ENCODE measurements at regions of chr1 and their contacts with region 1.

Region 1: GRCh38 chr1:32716312-32717148 is 14.0 kb upstream of the SYNC start:
- DNase-seq: peak; percentile 70
- H3K4me3 ChIP-seq: no peak overlapping the region
- H3K27ac ChIP-seq: no peak overlapping the region; a peak in 1 of 4 replicates
- H3K4me1 ChIP-seq: peaks cover 0 to 4% of the 10 kb centered on the region in 2 experiments; a peak in 1 of 4 replicates
- H3K27me3 ChIP-seq: no peaks in the 10 kb centered on the region
- CTCF ChIP-seq: no peak
- EP300 ChIP-seq: no peak
- RAD21 ChIP-seq: no peak

Region 2: GRCh38 chr1:32609180-32609579 is 107.3 kb before region 1 on chr1:
- CTCF ChIA-PET with region 1: no interaction called
- POLR2A ChIA-PET with region 1: no interaction called
- DNase-seq: no peak
- H3K4me3 ChIP-seq: no peak overlapping the region
- H3K27ac ChIP-seq: no peak overlapping the region
- H3K4me1 ChIP-seq: peaks cover 0 to 3% of the 10 kb centered on the region in 2 experiments; a peak in 1 of 4 replicates
- H3K27me3 ChIP-seq: no peaks in the 10 kb centered on the region
- CTCF ChIP-seq: no peak
- EP300 ChIP-seq: no peak
- RAD21 ChIP-seq: no peak

Region 3: GRCh38 chr1:32695098-32695904 is 21.2 kb before region 1 on chr1:
- CTCF ChIA-PET with region 1: interaction called, 74 read pairs
- POLR2A ChIA-PET with region 1: no interaction called
- DNase-seq: no peak
- H3K4me3 ChIP-seq: no peak overlapping the region
- H3K27ac ChIP-seq: no peak overlapping the region
- H3K4me1 ChIP-seq: no peaks in the 10 kb centered on the region; a peak in 1 of 4 replicates
- H3K27me3 ChIP-seq: no peaks in the 10 kb centered on the region
- CTCF ChIP-seq: no peak
- EP300 ChIP-seq: no peak
- RAD21 ChIP-seq: no peak

Region 4: DNA sequence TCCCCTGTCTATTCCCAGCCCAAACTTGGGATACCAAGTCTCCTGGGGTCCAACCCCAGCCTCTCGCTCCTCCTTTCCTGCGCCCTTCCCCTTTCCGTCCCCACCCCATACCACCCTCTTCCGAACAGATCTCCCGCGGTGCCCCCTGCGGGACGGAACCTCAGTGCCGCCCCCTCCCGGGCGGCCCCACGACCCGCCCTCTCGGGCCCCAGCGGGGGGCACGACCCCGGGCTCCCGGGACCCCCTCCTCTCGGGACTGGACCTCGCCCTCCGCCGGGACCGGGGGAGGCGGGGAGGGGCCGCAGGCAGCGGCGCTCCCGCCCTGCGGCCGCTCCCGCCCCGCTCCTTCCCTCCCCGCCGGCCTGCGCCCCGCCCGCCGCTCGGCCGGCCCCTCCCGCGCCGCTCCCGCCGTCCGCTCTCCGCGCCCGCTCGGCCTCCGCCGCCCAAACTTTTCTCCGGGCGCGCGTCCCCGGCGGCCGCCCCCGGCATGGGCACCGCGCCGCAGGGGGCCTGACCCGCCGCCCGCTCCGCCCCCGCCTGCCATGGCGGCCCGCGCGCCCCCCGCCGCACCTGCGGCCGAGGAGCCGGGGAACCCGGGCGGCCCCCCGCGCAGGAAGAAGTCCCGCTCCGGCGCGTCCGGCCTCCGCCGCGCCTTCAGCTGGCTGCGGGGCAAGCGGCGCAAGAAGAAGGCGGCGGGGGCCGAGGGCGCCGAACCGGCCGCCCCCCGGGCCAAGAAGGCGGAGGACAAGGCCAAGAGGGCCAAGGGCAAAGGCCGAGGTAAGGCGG is 25.1 kb after region 1 on chr1:
- CTCF ChIA-PET with region 1: interaction called, 29 read pairs
- POLR2A ChIA-PET with region 1: no interaction called
- DNase-seq: peak; percentile 88
- H3K4me3 ChIP-seq: peak overlapping the region; percentile 66 to 72
- H3K27ac ChIP-seq: no peak overlapping the region
- H3K4me1 ChIP-seq: peaks cover 0 to 23% of the 10 kb centered on the region in 2 experiments; a peak in 1 of 4 replicates
- H3K27me3 ChIP-seq: no peaks in the 10 kb centered on the region
- CTCF ChIP-seq: peak; percentile 61
- EP300 ChIP-seq: no peak
- RAD21 ChIP-seq: no peak

Region 5: GRCh38 chr1:32761253-32761880 is 44.8 kb after region 1 on chr1:
- CTCF ChIA-PET with region 1: interaction called, 392 read pairs
- POLR2A ChIA-PET with region 1: no interaction called
- DNase-seq: peak; percentile 67
- H3K4me3 ChIP-seq: no peak overlapping the region
- H3K27ac ChIP-seq: peak overlapping the region; percentile 6 to 44; a peak in 2 of 4 replicates
- H3K4me1 ChIP-seq: peaks cover 20 to 42% of the 10 kb centered on the region in 2 experiments; a peak in 3 of 4 replicates
- H3K27me3 ChIP-seq: no peaks in the 10 kb centered on the region
- CTCF ChIP-seq: no peak
- EP300 ChIP-seq: no peak
- RAD21 ChIP-seq: no peak

Region 6: DNA sequence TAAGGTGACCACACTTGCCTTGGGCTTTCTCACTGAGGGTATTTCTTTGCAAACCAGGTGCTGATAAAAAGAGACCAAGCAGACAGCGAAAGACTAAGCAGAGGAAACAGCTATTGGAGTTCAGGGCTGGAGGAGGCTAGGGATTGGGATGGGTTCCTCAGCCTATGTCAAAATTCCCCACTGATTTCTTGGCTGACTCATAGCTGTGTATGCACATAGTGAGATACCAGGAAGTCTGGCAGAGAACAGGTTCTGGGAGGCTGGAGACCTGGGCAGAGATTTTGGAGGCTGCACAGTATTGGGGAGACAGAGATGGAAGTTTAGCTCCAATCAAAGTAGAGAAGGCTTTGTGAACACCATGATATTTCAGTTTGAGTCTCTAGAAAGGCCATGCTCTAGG is 75.4 kb after region 1 on chr1:
- CTCF ChIA-PET with region 1: interaction called, 16 read pairs
- POLR2A ChIA-PET with region 1: no interaction called
- DNase-seq: no peak
- H3K4me3 ChIP-seq: no peak overlapping the region
- H3K27ac ChIP-seq: no peak overlapping the region
- H3K4me1 ChIP-seq: 0 out of 4 replicates have a peak, but pooled peaks cover 0 to 11% of the 10 kb centered on the region in 2 experiments
- H3K27me3 ChIP-seq: no peaks in the 10 kb centered on the region
- CTCF ChIP-seq: no peak
- EP300 ChIP-seq: no peak
- RAD21 ChIP-seq: no peak

Region 7: DNA sequence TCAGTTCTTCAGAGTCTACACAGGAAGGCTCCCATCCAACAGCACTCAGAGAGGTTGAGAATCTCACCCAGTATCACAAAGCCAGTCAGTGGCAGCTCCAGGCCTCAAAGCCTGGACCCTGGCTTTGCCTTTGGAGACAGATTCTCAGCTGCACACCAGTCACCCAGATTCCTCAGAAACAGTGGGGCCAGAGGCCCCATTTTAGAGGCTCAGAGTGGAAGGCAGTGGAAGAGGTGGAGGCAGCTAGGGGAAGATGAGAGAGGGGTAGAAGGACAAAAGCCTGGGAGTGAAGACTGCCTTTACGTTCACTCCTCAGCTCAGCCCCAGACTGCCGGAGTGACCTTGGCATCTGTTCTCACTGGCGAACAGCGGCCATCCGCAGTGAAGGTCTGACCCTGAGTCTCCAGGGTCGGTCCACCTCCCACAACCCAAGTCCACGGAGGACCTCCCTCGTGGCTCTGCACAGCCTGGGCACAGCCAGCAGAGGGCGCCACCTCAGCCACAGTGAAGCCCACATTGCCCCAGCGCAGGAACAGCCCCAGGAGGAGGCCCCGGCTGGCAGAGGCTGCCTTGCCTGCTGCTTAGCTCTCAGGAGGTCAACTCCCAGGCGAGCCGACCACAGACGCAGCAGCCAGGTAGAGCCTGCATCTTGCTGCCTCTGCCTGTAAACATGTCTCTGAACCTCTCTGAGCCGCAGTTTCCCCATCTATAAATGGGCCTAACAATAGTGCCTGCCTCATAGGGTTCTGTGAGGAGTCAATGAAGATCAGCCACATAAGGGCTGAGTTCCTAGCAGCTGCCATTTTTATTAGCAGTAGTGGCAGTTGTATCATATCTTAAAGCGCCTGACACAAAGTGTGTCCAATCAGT is 160.0 kb after region 1 on chr1:
- CTCF ChIA-PET with region 1: interaction called, 35 read pairs
- POLR2A ChIA-PET with region 1: no interaction called
- DNase-seq: peak; percentile 87
- H3K4me3 ChIP-seq: no peak overlapping the region; a peak in 1 of 4 replicates
- H3K27ac ChIP-seq: no peak overlapping the region
- H3K4me1 ChIP-seq: peaks cover 0 to 21% of the 10 kb centered on the region in 2 experiments; a peak in 1 of 4 replicates
- H3K27me3 ChIP-seq: no peaks in the 10 kb centered on the region
- CTCF ChIP-seq: peak; percentile 82
- EP300 ChIP-seq: no peak
- RAD21 ChIP-seq: peak; percentile 57

Measured in SK-N-SH (cell line).